ENCODE measurements at regions of chr13 and their contacts with region 1.

Region 1: GRCh38 chr13:101452519-101453485 is at the start of gene ITGBL1:
- DNase-seq: peak; percentile 48
- H3K4me3 ChIP-seq: peak within 1 kb of the TSS in 2 of 3 experiments; percentile 24 to 37
- H3K27ac ChIP-seq: peak within 1 kb of the TSS; percentile 94
- H3K4me1 ChIP-seq: peaks cover 68% of the 10 kb centered on the region
- H3K27me3 ChIP-seq: no peaks in the 10 kb centered on the region
- CTCF ChIP-seq: no peak
- POLR2A ChIP-seq: no peak
- total RNA-seq, gene ITGBL1: 8.8 and 9.9 TPM in 2 replicates

Region 2: DNA sequence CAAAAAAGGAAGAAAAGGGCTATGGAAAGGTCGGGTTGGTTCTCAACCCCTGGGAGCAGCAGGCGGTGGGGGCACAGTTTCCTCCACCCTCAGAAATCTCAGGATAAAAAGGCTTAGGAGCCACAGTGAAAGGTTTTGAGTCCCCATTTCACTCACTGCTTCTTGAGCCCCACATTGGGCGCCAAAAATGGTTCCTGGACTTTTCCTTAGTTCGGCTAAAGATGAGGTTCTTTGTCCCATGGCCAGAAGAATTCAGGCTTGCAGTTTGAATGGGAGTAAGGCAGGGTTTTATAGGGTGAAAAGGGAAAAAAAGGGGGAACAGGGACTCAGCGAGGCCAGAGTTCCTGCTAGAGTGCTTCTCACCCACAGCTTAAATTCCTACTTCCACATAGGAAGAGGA is 1043.7 kb before region 1 on chr13:
- CTCF ChIA-PET with region 1: no interaction called
- POLR2A ChIA-PET with region 1: no interaction called
- dilution Hi-C with region 1: no loop called
- intact Hi-C with region 1: no loop called
- DNase-seq: no peak
- H3K4me3 ChIP-seq: no peak overlapping the region
- H3K27ac ChIP-seq: no peak overlapping the region
- H3K4me1 ChIP-seq: no peaks in the 10 kb centered on the region
- H3K27me3 ChIP-seq: no peaks in the 10 kb centered on the region
- CTCF ChIP-seq: no peak
- POLR2A ChIP-seq: no peak

Region 3: DNA sequence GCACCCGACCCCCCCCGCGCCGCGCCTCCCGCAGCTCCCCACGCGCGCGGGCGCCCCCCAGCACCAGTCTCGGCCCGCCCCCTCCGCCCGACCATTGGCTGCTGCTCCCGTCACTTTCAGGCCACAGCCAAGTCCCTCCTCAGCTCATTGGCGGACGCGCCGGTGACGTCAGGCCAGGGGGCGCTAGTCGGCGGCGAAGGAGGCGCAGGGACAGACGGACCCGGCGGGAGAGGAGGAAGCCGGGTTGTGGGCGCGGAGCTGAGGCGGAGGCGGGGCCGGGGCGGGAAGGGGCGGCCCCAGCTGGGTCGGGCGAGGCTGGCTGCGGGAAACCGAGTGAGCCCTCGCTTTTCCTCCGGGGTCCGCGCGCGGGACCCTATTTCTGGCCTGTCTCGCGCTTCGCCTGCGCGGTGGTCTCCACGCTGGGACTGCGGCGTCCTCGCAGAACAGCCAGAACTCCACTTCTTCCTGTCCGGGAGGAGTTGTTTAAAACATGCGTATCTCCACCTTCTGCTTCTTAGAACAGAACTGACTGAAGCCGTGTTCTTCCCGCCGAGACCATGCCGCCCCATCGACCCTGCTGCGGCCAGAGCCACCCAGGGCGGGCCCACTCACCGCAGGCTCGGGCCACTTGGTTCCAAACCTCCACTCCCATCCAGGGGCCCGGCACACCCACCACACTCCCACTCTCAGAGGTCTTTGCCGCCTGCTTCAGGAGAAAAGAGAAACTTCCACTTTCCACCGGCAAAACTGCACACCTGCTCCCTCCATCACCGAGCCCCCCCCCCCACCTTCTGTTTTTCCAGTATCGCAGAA is 777.7 kb before region 1 on chr13:
- CTCF ChIA-PET with region 1: no interaction called
- POLR2A ChIA-PET with region 1: no interaction called
- dilution Hi-C with region 1: no loop called
- intact Hi-C with region 1: loop called (anchors 5 kb)
- DNase-seq: peak; percentile 99
- H3K4me3 ChIP-seq: peak overlapping the region; percentile 60 to 82 (median 81)
- H3K27ac ChIP-seq: peak overlapping the region; percentile 60
- H3K4me1 ChIP-seq: peaks cover 14% of the 10 kb centered on the region
- H3K27me3 ChIP-seq: peaks cover 0 to 3% of the 10 kb centered on the region in 2 experiments
- CTCF ChIP-seq: peak in 1 of 2 donors; percentile 45
- POLR2A ChIP-seq: no peak

Region 4: GRCh38 chr13:101289764-101290163 is 163.0 kb before region 1 on chr13:
- CTCF ChIA-PET with region 1: no interaction called
- POLR2A ChIA-PET with region 1: no interaction called
- dilution Hi-C with region 1: no loop called
- intact Hi-C with region 1: no loop called
- DNase-seq: peak; percentile 16
- H3K4me3 ChIP-seq: no peak overlapping the region
- H3K27ac ChIP-seq: no peak overlapping the region
- H3K4me1 ChIP-seq: no peaks in the 10 kb centered on the region
- H3K27me3 ChIP-seq: no peaks in the 10 kb centered on the region
- CTCF ChIP-seq: no peak
- POLR2A ChIP-seq: no peak

Region 5: DNA sequence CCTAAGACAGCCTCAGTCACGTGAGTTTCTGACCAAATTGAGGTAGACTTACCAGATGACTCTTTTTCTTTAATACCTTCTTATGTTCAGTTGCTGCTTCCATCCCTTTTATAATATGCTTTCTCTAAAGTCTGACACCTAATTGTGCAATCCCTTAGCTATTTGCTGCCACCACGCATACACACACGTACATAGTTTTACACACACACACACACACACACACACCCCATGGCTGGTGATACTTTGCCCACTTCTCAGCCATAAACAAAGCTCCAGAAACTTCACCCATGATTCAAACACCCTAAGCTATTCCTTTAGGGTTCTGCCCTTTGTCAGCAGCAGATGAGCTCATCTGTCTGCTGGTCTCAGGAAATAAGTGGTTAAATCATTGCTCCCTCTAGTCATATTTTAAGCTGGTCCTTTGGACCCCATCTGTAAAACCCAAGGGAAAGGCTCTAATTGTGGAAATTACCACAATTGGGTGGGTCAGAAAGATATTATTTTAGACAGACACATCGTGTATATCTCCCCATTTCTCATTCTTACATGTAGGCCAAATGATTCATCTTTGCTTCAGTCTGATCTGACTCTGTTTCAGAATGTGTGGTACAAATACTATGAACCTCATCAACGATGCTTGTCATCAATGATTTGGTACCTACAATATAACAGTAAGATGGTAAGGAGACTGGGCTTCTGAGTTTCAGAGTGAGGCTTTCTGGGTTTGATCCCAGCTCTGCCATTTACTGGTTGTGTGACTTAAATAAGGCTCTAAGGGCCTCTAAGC is 105.7 kb before region 1 on chr13:
- CTCF ChIA-PET with region 1: no interaction called
- POLR2A ChIA-PET with region 1: no interaction called
- dilution Hi-C with region 1: no loop called
- intact Hi-C with region 1: loop called (anchors 1 kb)
- DNase-seq: no peak
- H3K4me3 ChIP-seq: no peak overlapping the region
- H3K27ac ChIP-seq: no peak overlapping the region
- H3K4me1 ChIP-seq: peaks cover 14% of the 10 kb centered on the region
- H3K27me3 ChIP-seq: no peaks in the 10 kb centered on the region
- CTCF ChIP-seq: no peak
- POLR2A ChIP-seq: no peak

Region 6: GRCh38 chr13:101416174-101417042 is 36.4 kb before region 1 on chr13 and contains the start of gene NALCN:
- CTCF ChIA-PET with region 1: interaction called, 4 read pairs
- POLR2A ChIA-PET with region 1: interaction called, 6 read pairs
- dilution Hi-C with region 1: no loop called
- intact Hi-C with region 1: loop called (anchors 1 kb)
- DNase-seq: peak; percentile 49
- H3K4me3 ChIP-seq: peak within 1 kb of the TSS; percentile 0 to 64 (median 43)
- H3K27ac ChIP-seq: no peak within 1 kb of the TSS
- H3K4me1 ChIP-seq: peaks cover 10% of the 10 kb centered on the region
- H3K27me3 ChIP-seq: no peaks in the 10 kb centered on the region
- CTCF ChIP-seq: no peak
- POLR2A ChIP-seq: no peak
- total RNA-seq, gene NALCN: 4.4 and 6.8 TPM in 2 replicates

Region 7: DNA sequence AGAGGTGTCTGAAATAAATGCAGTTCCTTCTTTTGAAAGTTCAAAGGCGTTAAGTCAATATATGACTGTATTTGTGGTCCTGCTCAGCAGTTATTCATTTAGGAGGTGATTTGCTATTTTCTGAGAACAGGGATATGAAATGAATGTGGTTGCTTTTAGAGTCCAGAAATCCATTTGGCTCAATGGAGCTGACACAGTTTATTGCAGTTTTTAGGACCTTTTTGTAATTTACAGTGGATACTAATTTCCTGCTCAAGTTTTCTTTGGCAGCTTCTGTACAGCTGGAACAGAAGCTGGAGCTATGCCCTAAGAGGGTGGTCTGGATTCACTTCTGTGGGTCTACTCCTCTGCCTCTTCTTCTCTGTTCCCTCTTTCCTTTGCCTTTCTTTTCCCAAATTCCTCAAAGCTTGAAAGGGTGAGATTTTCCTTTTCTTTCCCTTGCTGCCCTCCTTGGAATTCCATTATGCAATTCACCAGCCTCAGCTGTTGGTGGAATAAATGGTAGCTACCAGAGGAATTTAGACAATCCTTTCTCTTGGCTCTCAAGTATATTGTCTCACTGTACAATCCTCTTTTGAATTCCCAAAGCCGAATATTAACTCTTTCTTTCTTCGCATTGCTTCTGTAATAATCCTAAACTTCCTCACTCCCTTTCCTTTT is 39.6 kb after region 1 on chr13:
- CTCF ChIA-PET with region 1: interaction called, 3 read pairs
- POLR2A ChIA-PET with region 1: no interaction called
- dilution Hi-C with region 1: no loop called
- intact Hi-C with region 1: loop called (anchors 1 kb)
- DNase-seq: peak; percentile 83
- H3K4me3 ChIP-seq: no peak overlapping the region
- H3K27ac ChIP-seq: peak overlapping the region; percentile 20
- H3K4me1 ChIP-seq: peaks cover 41% of the 10 kb centered on the region
- H3K27me3 ChIP-seq: no peaks in the 10 kb centered on the region
- CTCF ChIP-seq: no peak
- POLR2A ChIP-seq: no peak

Region 8: GRCh38 chr13:101640788-101641400 is 188.1 kb after region 1 on chr13:
- CTCF ChIA-PET with region 1: no interaction called
- POLR2A ChIA-PET with region 1: no interaction called
- dilution Hi-C with region 1: no loop called
- intact Hi-C with region 1: loop called (anchors 1 kb)
- DNase-seq: peak; percentile 68
- H3K4me3 ChIP-seq: no peak overlapping the region
- H3K27ac ChIP-seq: peak overlapping the region; percentile 84
- H3K4me1 ChIP-seq: peaks cover 24% of the 10 kb centered on the region
- H3K27me3 ChIP-seq: no peaks in the 10 kb centered on the region
- CTCF ChIP-seq: no peak
- POLR2A ChIP-seq: no peak